H1 (cell line): ENCODE measurements at regions of chr5 and their contacts with region 1.

Region 1: DNA sequence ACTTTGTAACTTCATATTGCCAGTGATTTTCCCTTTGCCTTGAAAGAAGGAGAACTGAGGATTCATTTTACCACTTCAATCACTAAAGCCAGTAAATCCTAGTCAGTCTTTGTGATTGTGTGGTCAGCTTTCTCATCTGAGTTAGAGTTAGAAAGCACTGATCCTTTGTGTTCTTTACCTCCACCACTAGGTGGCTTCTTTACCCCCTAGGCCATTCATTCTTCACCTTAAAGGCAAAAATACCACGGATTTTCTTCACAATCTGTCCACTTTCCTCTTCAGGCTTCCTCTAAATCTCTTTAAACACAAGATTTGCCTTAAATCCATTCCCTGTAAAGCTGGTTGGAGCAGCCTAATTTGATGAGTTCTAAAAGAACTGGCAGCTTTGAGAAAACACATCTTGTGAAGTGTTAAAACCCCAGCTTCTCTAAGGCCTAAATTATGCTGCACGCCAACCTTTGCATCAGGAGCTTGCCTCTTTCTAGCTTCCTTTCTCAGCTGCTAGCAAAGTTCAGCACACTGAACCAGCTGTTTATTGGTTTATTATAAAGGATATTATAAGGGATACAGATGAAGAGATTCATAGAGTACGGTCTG is 20.4 kb downstream of the BDP1 start:
- DNase-seq: no peak
- H3K4me3 ChIP-seq: no peak overlapping the region
- H3K27ac ChIP-seq: no peak overlapping the region
- H3K4me1 ChIP-seq: no peaks in the 10 kb centered on the region
- H3K27me3 ChIP-seq: no peaks in the 10 kb centered on the region
- CTCF ChIP-seq: peak in 2 of 3 experiments; percentile 52 to 80; a peak in 2 of 4 replicates
- EP300 ChIP-seq: no peak
- POLR2A ChIP-seq: no peak
- RAD21 ChIP-seq: peak; percentile 35 to 39

Region 2: DNA sequence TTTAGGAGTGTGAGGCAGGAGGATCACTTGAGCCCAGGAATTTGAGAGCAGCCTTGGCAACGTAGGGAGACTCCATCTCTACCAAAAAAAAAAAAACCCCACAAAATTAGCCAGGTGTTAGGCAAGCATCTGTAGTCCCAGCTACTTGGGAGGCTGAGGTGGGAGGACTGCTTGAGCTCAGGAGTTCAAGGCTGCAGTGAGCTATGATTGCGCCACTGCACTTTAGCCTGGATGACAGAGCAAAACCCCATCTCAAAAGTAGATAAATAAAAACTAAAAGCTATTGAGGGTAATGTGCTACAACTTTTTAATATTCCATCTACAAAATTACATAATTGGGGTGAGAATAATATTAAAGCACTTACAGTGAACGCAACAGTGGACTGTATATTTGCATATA is 14.5 kb before region 1 on chr5:
- CTCF ChIA-PET with region 1: interaction called, 20 read pairs
- POLR2A ChIA-PET with region 1: interaction called, 3 read pairs
- DNase-seq: no peak
- H3K4me3 ChIP-seq: no peak overlapping the region
- H3K27ac ChIP-seq: no peak overlapping the region
- H3K4me1 ChIP-seq: no peaks in the 10 kb centered on the region
- H3K27me3 ChIP-seq: no peaks in the 10 kb centered on the region
- CTCF ChIP-seq: no peak
- EP300 ChIP-seq: no peak
- POLR2A ChIP-seq: no peak
- RAD21 ChIP-seq: no peak

Region 3: GRCh38 chr5:71492817-71493615 is 17.1 kb after region 1 on chr5:
- CTCF ChIA-PET with region 1: interaction called, 29 read pairs
- POLR2A ChIA-PET with region 1: no interaction called
- DNase-seq: no peak
- H3K4me3 ChIP-seq: no peak overlapping the region
- H3K27ac ChIP-seq: no peak overlapping the region
- H3K4me1 ChIP-seq: no peaks in the 10 kb centered on the region
- H3K27me3 ChIP-seq: no peaks in the 10 kb centered on the region
- CTCF ChIP-seq: no peak
- EP300 ChIP-seq: no peak
- POLR2A ChIP-seq: no peak
- RAD21 ChIP-seq: no peak

Region 4: GRCh38 chr5:71719063-71719964 is 243.4 kb after region 1 on chr5 and contains the start of gene CARTPT:
- CTCF ChIA-PET with region 1: no interaction called
- POLR2A ChIA-PET with region 1: no interaction called
- DNase-seq: peak in 1 of 2 experiments; percentile 82
- H3K4me3 ChIP-seq: peak within 1 kb of the TSS in 3 of 4 experiments; percentile 32 to 51 (median 45); a peak in 5 of 8 replicates
- H3K27ac ChIP-seq: no peak within 1 kb of the TSS
- H3K4me1 ChIP-seq: peaks cover 2 to 8% (median 6%) of the 10 kb centered on the region in 4 experiments; a peak in 5 of 7 replicates
- H3K27me3 ChIP-seq: peaks cover 9 to 30% (median 28%) of the 10 kb centered on the region in 4 experiments
- CTCF ChIP-seq: peak in 2 of 3 experiments; percentile 0 to 1; a peak in 1 of 4 replicates
- EP300 ChIP-seq: no peak
- POLR2A ChIP-seq: no peak
- RAD21 ChIP-seq: peak in 1 of 2 experiments; percentile 23; a peak in 1 of 4 replicates
- total RNA-seq, gene CARTPT: not detected in 2 replicates